CD4-positive, alpha-beta memory T cell (primary cell): ENCODE measurements at regions of chr17 and their contacts with region 1.

Region 1: DNA sequence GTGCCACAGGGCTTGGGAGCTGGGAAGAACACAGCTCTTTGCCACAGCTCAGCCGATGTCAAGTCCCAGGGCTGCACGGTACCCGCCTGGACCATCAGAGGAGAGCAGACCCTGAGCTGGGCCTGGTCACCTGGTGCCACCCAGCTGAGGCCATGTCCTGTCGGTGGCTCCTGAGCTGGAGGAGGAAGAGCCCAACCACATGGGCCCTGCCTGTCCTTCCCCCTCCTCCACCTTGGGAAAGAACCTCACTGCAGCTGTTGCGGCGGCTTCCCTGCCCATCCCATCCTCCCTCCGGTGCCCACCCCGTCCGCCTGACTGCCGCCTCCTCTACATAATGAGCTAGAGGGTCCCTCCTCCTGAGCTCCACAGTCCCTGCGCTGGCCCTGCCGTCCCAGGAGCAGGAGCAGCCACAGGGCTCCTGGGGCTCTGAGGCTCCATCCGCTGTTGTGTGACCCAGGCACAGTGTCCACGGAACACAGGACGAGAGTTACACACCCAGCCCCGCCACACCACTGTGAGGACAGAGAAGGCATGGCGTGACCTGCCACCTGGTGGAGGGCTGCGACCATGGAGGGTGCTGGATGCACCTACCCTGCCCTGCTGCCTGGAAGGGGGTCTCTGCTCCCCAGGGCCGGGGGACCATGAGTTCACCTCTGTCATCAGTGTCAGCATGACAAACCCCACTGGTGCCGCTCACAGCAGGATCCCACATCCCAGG is 21.4 kb upstream of the CHMP6 start:
- DNase-seq: peak in 4 of 5 donors; percentile 26 to 43 (median 30)
- H3K4me3 ChIP-seq: no peak overlapping the region
- H3K4me3 Mint-ChIP-seq: peak overlapping the region in 1 of 8 donors; percentile 36
- H3K27ac ChIP-seq: no peak overlapping the region
- H3K27ac Mint-ChIP-seq: peak overlapping the region in 3 of 7 donors; percentile 15 to 87 (median 37)
- H3K4me1 ChIP-seq: peaks cover 16% of the 10 kb centered on the region
- H3K4me1 Mint-ChIP-seq: peaks cover 0 to 6% (median 2%) of the 10 kb centered on the region in 4 donors
- H3K27me3 ChIP-seq: no peaks in the 10 kb centered on the region
- H3K27me3 Mint-ChIP-seq: peaks cover 0 to 2% of the 10 kb centered on the region in 2 donors

Region 2: GRCh38 chr17:80426681-80427326 is 543.4 kb before region 1 on chr17:
- CTCF ChIA-PET with region 1: interaction called, 20 read pairs
- POLR2A ChIA-PET with region 1: interaction called, 3 read pairs
- intact Hi-C with region 1: loop called (anchors 1 kb)
- DNase-seq: peak; percentile 83 to 87 (median 86)
- H3K4me3 ChIP-seq: no peak overlapping the region
- H3K4me3 Mint-ChIP-seq: no peak overlapping the region
- H3K27ac ChIP-seq: no peak overlapping the region
- H3K27ac Mint-ChIP-seq: peak overlapping the region in 4 of 7 donors; percentile 47 to 80 (median 68)
- H3K4me1 ChIP-seq: peaks cover 13% of the 10 kb centered on the region
- H3K4me1 Mint-ChIP-seq: peaks cover 4 to 13% (median 9%) of the 10 kb centered on the region in 4 donors
- H3K27me3 ChIP-seq: no peaks in the 10 kb centered on the region
- H3K27me3 Mint-ChIP-seq: no peaks in the 10 kb centered on the region

Region 3: GRCh38 chr17:80866147-80866793 is 103.9 kb before region 1 on chr17:
- CTCF ChIA-PET with region 1: interaction called, 6 read pairs
- POLR2A ChIA-PET with region 1: no interaction called
- intact Hi-C with region 1: loop called (anchors 2 kb)
- DNase-seq: peak; percentile 43 to 59 (median 51)
- H3K4me3 ChIP-seq: no peak overlapping the region
- H3K4me3 Mint-ChIP-seq: peak overlapping the region in 1 of 8 donors; percentile 1
- H3K27ac ChIP-seq: no peak overlapping the region
- H3K27ac Mint-ChIP-seq: peak overlapping the region in 5 of 7 donors; percentile 5 to 69 (median 25)
- H3K4me1 ChIP-seq: peaks cover 27% of the 10 kb centered on the region
- H3K4me1 Mint-ChIP-seq: peaks cover 27 to 48% (median 38%) of the 10 kb centered on the region in 4 donors
- H3K27me3 ChIP-seq: no peaks in the 10 kb centered on the region
- H3K27me3 Mint-ChIP-seq: no peaks in the 10 kb centered on the region

Region 4: GRCh38 chr17:80959330-80960036 is 10.7 kb before region 1 on chr17:
- CTCF ChIA-PET with region 1: no interaction called
- POLR2A ChIA-PET with region 1: no interaction called
- intact Hi-C with region 1: no loop called
- DNase-seq: no peak
- H3K4me3 ChIP-seq: no peak overlapping the region
- H3K4me3 Mint-ChIP-seq: no peak overlapping the region
- H3K27ac ChIP-seq: no peak overlapping the region
- H3K27ac Mint-ChIP-seq: no peak overlapping the region
- H3K4me1 ChIP-seq: no peaks in the 10 kb centered on the region
- H3K4me1 Mint-ChIP-seq: no peaks in the 10 kb centered on the region
- H3K27me3 ChIP-seq: no peaks in the 10 kb centered on the region
- H3K27me3 Mint-ChIP-seq: no peaks in the 10 kb centered on the region

Region 5: GRCh38 chr17:80986816-80987475 is 16.7 kb after region 1 on chr17:
- CTCF ChIA-PET with region 1: no interaction called
- POLR2A ChIA-PET with region 1: no interaction called
- intact Hi-C with region 1: no loop called
- DNase-seq: no peak
- H3K4me3 ChIP-seq: no peak overlapping the region
- H3K4me3 Mint-ChIP-seq: no peak overlapping the region
- H3K27ac ChIP-seq: no peak overlapping the region
- H3K27ac Mint-ChIP-seq: no peak overlapping the region
- H3K4me1 ChIP-seq: peaks cover 19% of the 10 kb centered on the region
- H3K4me1 Mint-ChIP-seq: peaks cover 5 to 22% (median 11%) of the 10 kb centered on the region in 4 donors
- H3K27me3 ChIP-seq: no peaks in the 10 kb centered on the region
- H3K27me3 Mint-ChIP-seq: peaks cover 4 to 8% of the 10 kb centered on the region in 2 donors

Region 6: GRCh38 chr17:82230627-82231311 is 1260.6 kb after region 1 on chr17:
- CTCF ChIA-PET with region 1: no interaction called
- POLR2A ChIA-PET with region 1: no interaction called
- intact Hi-C with region 1: no loop called
- DNase-seq: peak; percentile 42 to 76 (median 48)
- H3K4me3 ChIP-seq: peak overlapping the region in 1 of 2 donors; percentile 32
- H3K4me3 Mint-ChIP-seq: peak overlapping the region in 5 of 8 donors; percentile 17 to 84 (median 77)
- H3K27ac ChIP-seq: peak overlapping the region; percentile 38
- H3K27ac Mint-ChIP-seq: no peak overlapping the region
- H3K4me1 ChIP-seq: peaks cover 42% of the 10 kb centered on the region
- H3K4me1 Mint-ChIP-seq: peaks cover 2 to 37% (median 15%) of the 10 kb centered on the region in 4 donors
- H3K27me3 ChIP-seq: no peaks in the 10 kb centered on the region
- H3K27me3 Mint-ChIP-seq: no peaks in the 10 kb centered on the region